ENCODE measurements at regions of chr4 and their contacts with region 1.

Region 1: GRCh38 chr4:55546756-55547465 is at the start of gene CLOCK:
- DNase-seq: peak; percentile 91 to 95
- ATAC-seq: peak; percentile 87 to 93 (median 90)
- H3K4me3 ChIP-seq: peak within 1 kb of the TSS; percentile 97
- H3K27ac ChIP-seq: peak within 1 kb of the TSS; percentile 96
- H3K4me1 ChIP-seq: peaks cover 18% of the 10 kb centered on the region
- H3K27me3 ChIP-seq: no peaks in the 10 kb centered on the region
- CTCF ChIP-seq: peak; percentile 63
- total RNA-seq, gene CLOCK: 21.8 to 54.1 (median 31.5) TPM

Region 2: DNA sequence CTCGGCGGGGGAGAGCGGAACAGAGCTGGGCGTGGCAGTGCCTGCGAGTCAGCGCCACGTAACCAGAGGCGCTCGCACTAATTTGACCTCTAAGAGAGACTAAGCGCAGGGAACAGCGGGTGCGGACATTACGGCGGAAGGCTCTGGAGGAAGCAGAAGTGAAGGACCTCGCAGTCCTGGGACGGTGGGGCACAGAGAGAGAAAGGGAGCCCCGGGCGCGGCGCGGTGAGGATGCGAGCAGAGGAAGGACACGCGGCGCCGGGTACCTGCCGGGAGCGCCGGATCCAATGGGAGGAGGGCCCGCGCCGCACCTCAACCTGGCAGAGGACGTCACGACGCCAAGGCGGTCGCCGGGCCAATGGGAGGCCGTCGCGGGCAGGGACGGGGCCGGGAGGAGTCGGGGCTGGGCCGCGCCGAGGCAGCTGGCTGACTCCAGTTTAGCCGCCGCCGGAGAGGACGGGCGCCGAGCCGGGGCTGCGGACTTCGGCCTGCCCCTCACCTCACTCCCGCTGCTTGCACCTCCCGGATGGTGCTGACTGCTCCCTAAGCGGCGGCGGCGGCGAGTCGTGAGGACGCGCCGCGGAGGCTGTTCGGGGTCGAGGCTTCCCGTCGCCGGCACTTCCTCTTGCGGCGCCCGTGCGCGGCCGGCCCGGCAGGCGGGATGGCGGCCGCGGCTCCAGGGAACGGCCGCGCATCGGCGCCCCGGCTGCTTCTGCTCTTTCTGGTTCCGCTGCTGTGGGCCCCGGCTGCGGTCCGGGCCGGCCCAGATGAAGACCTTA is 151.2 kb before region 1 on chr4 and contains the start of gene TMEM165:
- intact Hi-C with region 1: loop called in 1 of 2 experiments (anchors 5 kb)
- DNase-seq: peak; percentile 91 to 94
- ATAC-seq: peak; percentile 97 to 99 (median 98)
- H3K4me3 ChIP-seq: peak within 1 kb of the TSS; percentile 92
- H3K27ac ChIP-seq: peak within 1 kb of the TSS; percentile 95
- H3K4me1 ChIP-seq: peaks cover 30% of the 10 kb centered on the region
- H3K27me3 ChIP-seq: no peaks in the 10 kb centered on the region
- CTCF ChIP-seq: no peak
- total RNA-seq, gene TMEM165: 16.0 to 42.4 (median 27.5) TPM

Region 3: GRCh38 chr4:55435141-55435841 is 111.6 kb before region 1 on chr4:
- intact Hi-C with region 1: loop called (anchors 5 to 10 kb)
- DNase-seq: no peak
- ATAC-seq: peak in 3 of 4 donors; percentile 48 to 53 (median 49)
- H3K4me3 ChIP-seq: no peak overlapping the region
- H3K27ac ChIP-seq: no peak overlapping the region
- H3K4me1 ChIP-seq: no peaks in the 10 kb centered on the region
- H3K27me3 ChIP-seq: no peaks in the 10 kb centered on the region
- CTCF ChIP-seq: no peak

Region 4: GRCh38 chr4:55675196-55675793 is 128.4 kb after region 1 on chr4:
- intact Hi-C with region 1: no loop called
- DNase-seq: no peak
- ATAC-seq: no peak
- H3K4me3 ChIP-seq: no peak overlapping the region
- H3K27ac ChIP-seq: no peak overlapping the region
- H3K4me1 ChIP-seq: no peaks in the 10 kb centered on the region
- H3K27me3 ChIP-seq: peaks cover 0 to 2% (median 0%) of the 10 kb centered on the region in 3 donors
- CTCF ChIP-seq: no peak

Region 5: DNA sequence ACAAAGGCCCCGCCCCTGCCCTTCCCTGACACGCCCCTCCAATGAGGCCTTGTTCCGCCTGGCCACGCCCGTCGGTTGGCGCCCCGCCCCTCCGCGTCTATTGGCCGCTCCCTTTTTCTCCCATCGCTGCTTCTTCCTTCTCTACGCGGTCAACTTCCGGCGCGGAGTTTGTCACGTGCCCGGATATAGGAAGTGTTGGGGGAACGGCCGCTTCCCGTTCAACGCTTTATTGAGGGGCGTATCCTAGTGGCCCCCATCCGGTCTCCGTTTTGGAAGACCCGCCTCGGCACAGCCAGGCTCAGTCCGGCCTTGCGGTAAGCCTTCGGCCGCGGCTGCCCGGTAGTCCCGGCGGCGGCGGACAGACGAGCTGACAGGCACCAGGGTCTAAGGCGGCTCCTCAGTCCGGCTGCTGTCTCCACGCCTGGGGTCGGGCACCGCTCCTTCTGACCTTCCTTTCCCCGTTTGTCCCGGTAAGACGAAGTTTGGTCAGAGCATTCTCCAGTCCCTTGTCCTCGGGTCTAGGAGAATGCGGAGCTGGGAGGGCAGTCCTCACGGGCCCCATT is 306.7 kb after region 1 on chr4 and contains the start of gene EXOC1:
- intact Hi-C with region 1: loop called (anchors 5 to 10 kb)
- DNase-seq: peak; percentile 99
- ATAC-seq: peak; percentile 100
- H3K4me3 ChIP-seq: peak within 1 kb of the TSS; percentile 100
- H3K27ac ChIP-seq: peak within 1 kb of the TSS; percentile 94
- H3K4me1 ChIP-seq: peaks cover 20% of the 10 kb centered on the region
- H3K27me3 ChIP-seq: peaks cover 0 to under 1% (median 0%) of the 10 kb centered on the region in 3 donors
- CTCF ChIP-seq: no peak
- total RNA-seq, gene EXOC1: 14.2 to 22.1 (median 18.4) TPM

Region 6: DNA sequence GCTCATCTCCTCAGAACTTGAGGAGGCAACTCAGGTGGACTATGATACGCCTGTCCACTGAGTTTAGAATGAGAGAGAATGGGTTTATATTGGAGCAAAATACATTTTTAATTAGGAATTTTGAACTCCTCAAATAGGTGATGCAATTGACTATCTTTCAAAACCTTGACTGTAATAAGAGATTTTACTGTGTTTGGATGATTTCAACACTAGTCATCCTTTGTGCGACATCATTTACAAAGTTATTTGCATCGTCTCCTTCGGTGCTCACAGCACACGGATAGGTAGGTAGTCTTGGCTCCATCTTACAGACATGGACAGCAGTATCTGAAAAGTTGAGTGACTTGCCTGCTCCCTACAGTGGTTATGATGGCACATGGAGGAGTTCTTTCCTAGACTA is 773.4 kb after region 1 on chr4:
- intact Hi-C with region 1: no loop called
- DNase-seq: no peak
- ATAC-seq: no peak
- H3K4me3 ChIP-seq: no peak overlapping the region
- H3K27ac ChIP-seq: no peak overlapping the region
- H3K4me1 ChIP-seq: no peaks in the 10 kb centered on the region
- H3K27me3 ChIP-seq: no peaks in the 10 kb centered on the region
- CTCF ChIP-seq: no peak

Region 7: DNA sequence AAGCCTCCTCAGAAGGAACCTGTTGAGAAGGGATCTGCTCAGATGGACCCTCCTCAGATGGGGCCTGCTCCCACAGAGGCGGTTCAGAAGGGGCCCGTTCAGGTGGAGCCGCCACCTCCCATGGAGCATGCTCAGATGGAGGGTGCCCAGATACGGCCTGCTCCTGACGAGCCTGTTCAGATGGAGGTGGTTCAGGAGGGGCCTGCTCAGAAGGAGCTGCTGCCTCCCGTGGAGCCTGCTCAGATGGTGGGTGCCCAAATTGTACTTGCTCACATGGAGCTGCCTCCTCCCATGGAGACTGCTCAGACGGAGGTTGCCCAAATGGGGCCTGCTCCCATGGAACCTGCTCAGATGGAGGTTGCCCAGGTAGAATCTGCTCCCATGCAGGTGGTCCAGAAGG is 1383.7 kb after region 1 on chr4:
- intact Hi-C with region 1: no loop called
- DNase-seq: no peak
- ATAC-seq: no peak
- H3K4me3 ChIP-seq: no peak overlapping the region
- H3K27ac ChIP-seq: no peak overlapping the region
- H3K4me1 ChIP-seq: no peaks in the 10 kb centered on the region
- H3K27me3 ChIP-seq: no peaks in the 10 kb centered on the region
- CTCF ChIP-seq: no peak